ENCODE measurements at regions of chr6 and their contacts with region 1.

Region 1: DNA sequence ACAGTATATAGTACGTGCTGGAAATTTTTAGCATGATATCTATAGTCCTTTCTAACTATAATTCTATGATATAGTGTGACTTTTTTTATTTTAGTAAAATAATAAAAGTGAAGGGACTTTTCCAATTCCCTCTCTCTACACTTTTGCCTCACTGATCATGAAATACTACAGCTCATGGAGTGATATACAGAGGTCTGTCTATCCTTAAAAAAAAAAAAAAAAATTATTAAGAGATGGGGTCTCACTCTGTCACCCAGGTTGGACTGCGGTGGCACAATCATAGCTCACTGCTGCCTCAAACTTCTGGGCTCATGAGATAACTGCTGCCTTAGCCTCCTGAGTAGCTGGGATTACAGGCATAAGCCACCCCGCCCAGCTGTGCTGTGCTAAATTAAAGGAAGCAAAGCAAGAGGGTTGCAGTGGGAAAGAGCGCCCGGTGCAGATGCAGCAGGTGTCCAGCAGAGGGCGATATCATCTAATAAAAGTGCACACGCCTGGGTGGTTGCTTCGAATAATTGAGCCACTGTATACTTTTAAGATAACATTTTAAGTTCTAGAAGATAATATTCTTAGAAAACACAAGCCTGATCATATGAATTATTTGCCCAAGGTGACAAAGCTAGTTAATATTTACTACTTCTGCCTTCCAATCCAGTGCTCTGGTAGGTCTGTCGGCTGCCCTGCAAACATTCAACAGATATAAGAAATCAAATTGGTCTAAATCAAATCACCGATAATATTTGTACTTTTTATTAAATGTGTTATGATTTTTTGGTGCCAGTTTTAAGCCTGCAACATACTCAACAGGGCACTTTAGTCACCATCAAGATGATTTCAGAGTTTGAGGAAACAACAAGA is 94.9 kb upstream of the NT5E start:
- DNase-seq: peak; percentile 84 to 88
- H3K4me3 ChIP-seq: no peak overlapping the region
- H3K27ac ChIP-seq: no peak overlapping the region
- H3K4me1 ChIP-seq: peaks cover 0 to 11% (median 4%) of the 10 kb centered on the region in 4 donors
- H3K27me3 ChIP-seq: no peaks in the 10 kb centered on the region
- CTCF ChIP-seq: peak in 6 of 7 experiments; percentile 68 to 99 (median 96)
- EP300 ChIP-seq: no peak
- POLR2A ChIP-seq: no peak

Region 2: DNA sequence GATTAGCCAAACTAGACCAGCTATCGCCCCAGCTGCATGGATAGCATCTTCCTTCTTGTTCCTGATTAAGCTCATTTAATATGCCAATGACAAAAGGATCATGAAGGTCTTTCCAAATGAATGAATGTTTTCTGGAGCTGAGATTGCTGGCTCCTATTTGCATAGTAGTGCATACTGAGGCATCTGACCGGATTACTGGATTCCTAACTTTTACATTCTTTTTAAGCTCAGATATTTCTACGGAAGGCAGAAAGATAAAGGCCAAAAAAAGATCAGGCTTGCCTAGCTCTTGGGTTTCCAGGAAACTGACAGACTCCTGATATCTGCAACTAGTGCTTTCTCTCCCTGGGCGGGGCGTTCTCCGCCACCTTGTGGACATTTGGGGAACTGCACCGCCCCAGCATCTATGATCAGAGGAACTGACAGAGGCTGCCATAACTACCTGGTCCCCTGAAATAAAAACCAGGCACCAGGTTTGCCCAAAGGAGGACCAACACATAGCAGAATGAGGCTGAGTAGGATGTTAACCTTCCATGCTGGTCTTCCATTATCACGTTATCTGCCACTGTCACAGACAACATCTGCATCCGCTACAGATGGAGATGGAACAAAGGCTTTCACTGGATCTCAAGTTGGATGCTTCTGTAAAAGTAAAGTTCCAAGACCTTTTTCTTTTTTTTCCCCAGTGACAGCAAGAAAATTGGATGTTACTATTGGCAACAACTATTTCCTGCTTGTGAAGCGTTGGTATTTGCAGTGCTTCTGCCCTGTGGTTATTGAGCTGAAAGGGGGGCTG is 128.1 kb after region 1 on chr6:
- intact Hi-C with region 1: loop called (anchors 5 kb)
- DNase-seq: peak; percentile 88
- H3K4me3 ChIP-seq: no peak overlapping the region
- H3K27ac ChIP-seq: peak overlapping the region in 2 of 5 donors; percentile 5 to 46
- H3K4me1 ChIP-seq: peaks cover 0 to 21% (median 10%) of the 10 kb centered on the region in 4 donors
- H3K27me3 ChIP-seq: no peaks in the 10 kb centered on the region
- CTCF ChIP-seq: peak in 6 of 7 experiments; percentile 97 to 100 (median 100)
- EP300 ChIP-seq: no peak
- POLR2A ChIP-seq: peak in 1 of 4 donors; percentile 18